BJ (cell line): ENCODE measurements at regions of chr7 and their contacts with region 1.

Region 1: DNA sequence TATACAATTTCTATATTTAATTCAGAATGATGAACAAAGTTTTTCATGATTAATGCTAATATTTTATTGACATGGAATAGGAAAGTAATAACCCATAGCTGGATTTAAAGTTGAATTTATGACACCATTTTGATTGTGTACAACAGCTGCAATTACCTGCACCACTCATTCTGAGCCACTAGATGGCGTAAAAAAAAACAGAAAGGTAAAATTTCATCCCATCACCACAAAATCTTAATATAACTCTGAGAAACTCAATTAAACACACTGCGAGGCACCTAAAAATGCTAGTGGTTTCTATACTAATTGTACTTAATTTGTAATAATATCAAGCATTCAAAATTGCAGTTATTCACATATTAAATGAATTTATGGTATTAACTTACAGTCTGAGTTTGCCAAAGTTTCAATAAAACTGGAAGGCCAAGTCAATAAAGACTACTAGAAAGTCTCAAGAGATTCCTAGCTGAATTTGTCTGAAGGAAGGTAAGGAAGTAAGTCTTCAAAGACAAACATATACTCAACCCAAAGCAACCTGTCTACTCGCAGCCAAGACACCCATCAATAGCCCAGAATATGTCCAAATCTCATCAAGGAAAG is 182.5 kb downstream of the SKAP2 start:
- DNase-seq: no peak
- H3K4me3 ChIP-seq: no peak overlapping the region
- H3K27me3 ChIP-seq: no peaks in the 10 kb centered on the region
- CTCF ChIP-seq: peak; percentile 66

Region 2: GRCh38 chr7:26534649-26535482 is 147.1 kb before region 1 on chr7:
- CTCF ChIA-PET with region 1: no interaction called
- POLR2A ChIA-PET with region 1: no interaction called
- DNase-seq: no peak
- H3K4me3 ChIP-seq: no peak overlapping the region
- H3K27me3 ChIP-seq: no peaks in the 10 kb centered on the region; the same call in 1 of the 2 replicates
- CTCF ChIP-seq: no peak

Region 3: GRCh38 chr7:26562841-26563240 is 119.1 kb before region 1 on chr7:
- CTCF ChIA-PET with region 1: no interaction called
- POLR2A ChIA-PET with region 1: no interaction called
- DNase-seq: no peak
- H3K4me3 ChIP-seq: no peak overlapping the region
- H3K27me3 ChIP-seq: no peaks in the 10 kb centered on the region
- CTCF ChIP-seq: no peak

Region 4: DNA sequence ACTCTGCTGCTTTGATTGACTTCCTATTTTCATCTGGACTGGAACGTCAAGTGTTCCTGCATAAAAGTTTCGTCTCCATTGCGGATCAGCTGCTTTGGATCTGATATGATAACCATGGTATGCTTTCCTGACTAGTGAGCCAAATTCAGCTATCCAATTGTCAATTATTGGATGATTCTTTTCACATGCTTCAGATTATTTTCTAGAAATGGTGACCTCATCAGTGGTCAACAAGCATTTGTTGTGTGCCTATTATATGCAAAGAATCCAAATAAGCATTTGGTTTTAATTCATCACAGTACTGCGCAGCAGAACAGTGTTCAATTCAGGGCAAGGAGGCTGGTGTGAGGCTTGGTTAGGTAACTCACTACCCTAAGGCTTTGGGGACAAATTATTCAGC is 18.1 kb before region 1 on chr7:
- CTCF ChIA-PET with region 1: no interaction called
- POLR2A ChIA-PET with region 1: no interaction called
- DNase-seq: no peak
- H3K4me3 ChIP-seq: no peak overlapping the region
- H3K27me3 ChIP-seq: no peaks in the 10 kb centered on the region
- CTCF ChIP-seq: no peak

Region 5: GRCh38 chr7:26694141-26694540 is 12.2 kb after region 1 on chr7:
- CTCF ChIA-PET with region 1: interaction called, 23 read pairs
- POLR2A ChIA-PET with region 1: no interaction called
- DNase-seq: no peak
- H3K4me3 ChIP-seq: no peak overlapping the region
- H3K27me3 ChIP-seq: no peaks in the 10 kb centered on the region
- CTCF ChIP-seq: no peak

Region 6: GRCh38 chr7:27150568-27151340 is 468.8 kb after region 1 on chr7:
- CTCF ChIA-PET with region 1: interaction called, 43 read pairs
- POLR2A ChIA-PET with region 1: no interaction called
- DNase-seq: no peak
- H3K4me3 ChIP-seq: peak overlapping the region; percentile 59
- H3K27me3 ChIP-seq: no peaks in the 10 kb centered on the region
- CTCF ChIP-seq: peak; percentile 74